HepG2 (cell line): ENCODE measurements at regions of chr20 and their contacts with region 1.

Region 1: DNA sequence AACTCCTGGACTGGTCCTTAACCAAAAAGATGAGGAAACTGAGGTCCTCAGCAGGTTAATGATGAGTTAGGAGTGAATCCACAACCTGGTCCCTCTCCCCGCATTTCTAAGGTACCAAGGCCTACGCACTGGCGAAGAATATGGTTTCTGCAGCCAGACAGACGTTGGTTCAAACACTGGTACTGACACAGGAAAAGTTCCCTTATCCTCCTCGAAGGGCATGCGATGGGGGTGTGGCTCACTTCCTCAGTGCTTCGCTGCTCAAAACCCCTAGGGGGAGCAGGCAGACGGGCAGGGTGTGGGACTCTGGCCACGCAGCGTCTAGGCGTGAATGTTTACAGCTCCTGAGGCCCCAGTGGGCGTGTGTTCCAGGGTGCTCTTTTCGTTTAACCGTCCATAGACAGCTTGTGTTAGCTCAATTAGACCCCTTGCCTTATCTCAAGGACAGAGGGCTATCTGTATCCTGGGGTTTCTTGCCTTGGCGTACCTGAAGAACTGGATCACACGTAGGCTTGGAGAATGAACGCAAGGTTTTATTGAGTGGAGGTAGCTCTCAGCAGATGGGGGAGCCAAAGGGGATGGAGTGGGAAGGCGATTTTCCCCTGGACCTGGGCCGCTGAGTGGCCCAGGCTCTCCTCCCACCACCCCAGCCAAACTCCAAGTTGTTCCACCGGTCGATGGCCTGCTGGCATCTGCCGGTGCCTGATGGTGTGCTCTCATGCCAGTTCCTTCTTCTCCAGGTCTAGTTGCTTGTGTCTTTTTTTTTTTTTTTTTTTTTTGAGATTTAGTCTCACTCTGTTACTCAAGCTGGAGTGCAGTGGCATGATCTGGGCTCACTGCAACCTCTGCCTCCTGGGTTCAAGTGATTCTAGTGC is 31.8 kb upstream of the PTPN1 start:
- DNase-seq: peak; percentile 83
- ATAC-seq: peak; percentile 99
- H3K4me3 ChIP-seq: peak overlapping the region in 1 of 3 experiments; percentile 24; a peak in 2 of 6 replicates
- H3K27ac ChIP-seq: no peak overlapping the region
- H3K4me1 ChIP-seq: peaks cover 37% of the 10 kb centered on the region
- H3K27me3 ChIP-seq: no peaks in the 10 kb centered on the region
- CTCF ChIP-seq: peak; percentile 98
- EP300 ChIP-seq: no peak
- POLR2A ChIP-seq: no peak
- RAD21 ChIP-seq: peak; percentile 90

Region 2: DNA sequence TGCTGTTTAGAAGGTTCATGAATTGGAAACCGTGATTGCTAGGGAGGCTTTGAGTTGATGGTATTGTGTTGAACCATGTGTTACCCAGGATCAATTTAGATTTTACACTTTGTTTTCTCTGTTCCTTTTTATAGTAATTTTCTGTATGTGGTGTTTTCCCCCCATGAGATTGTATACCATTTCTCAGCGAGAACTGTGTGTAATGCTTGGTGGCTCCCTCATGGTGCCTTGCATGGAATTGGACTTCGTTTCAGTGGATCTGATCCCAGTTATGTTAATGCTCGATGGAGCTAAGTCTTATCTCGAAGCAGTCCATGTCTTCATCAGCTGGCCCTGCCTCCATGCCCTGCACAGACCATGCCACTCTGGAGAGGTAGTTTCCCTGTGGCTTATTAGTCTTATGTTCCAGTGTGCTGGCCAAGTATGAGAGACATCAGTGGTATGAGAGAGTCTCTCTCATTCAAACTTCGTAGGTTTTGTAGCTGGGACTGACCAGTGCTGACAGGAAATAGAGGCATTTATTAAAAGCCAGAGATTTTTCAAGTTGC is 50.5 kb after region 1 on chr20:
- CTCF ChIA-PET with region 1: no interaction called
- POLR2A ChIA-PET with region 1: no interaction called
- in situ Hi-C with region 1: no loop called
- intact Hi-C with region 1: no loop called
- DNase-seq: no peak
- ATAC-seq: no peak
- H3K4me3 ChIP-seq: no peak overlapping the region
- H3K27ac ChIP-seq: no peak overlapping the region
- H3K4me1 ChIP-seq: peaks cover under 1% of the 10 kb centered on the region; the same call in 1 of the 2 replicates
- H3K27me3 ChIP-seq: no peaks in the 10 kb centered on the region
- CTCF ChIP-seq: no peak
- EP300 ChIP-seq: no peak
- POLR2A ChIP-seq: no peak
- RAD21 ChIP-seq: no peak

Region 3: GRCh38 chr20:50569864-50570836 is 91.8 kb after region 1 on chr20:
- CTCF ChIA-PET with region 1: interaction called, 45 read pairs
- POLR2A ChIA-PET with region 1: interaction called, 4 read pairs
- in situ Hi-C with region 1: loop called (anchors 5 kb)
- intact Hi-C with region 1: no loop called
- DNase-seq: peak; percentile 33
- ATAC-seq: peak; percentile 78
- H3K4me3 ChIP-seq: no peak overlapping the region
- H3K27ac ChIP-seq: no peak overlapping the region
- H3K4me1 ChIP-seq: peaks cover 8% of the 10 kb centered on the region
- H3K27me3 ChIP-seq: no peaks in the 10 kb centered on the region
- CTCF ChIP-seq: peak; percentile 57
- EP300 ChIP-seq: no peak
- POLR2A ChIP-seq: no peak
- RAD21 ChIP-seq: no peak

Region 4: DNA sequence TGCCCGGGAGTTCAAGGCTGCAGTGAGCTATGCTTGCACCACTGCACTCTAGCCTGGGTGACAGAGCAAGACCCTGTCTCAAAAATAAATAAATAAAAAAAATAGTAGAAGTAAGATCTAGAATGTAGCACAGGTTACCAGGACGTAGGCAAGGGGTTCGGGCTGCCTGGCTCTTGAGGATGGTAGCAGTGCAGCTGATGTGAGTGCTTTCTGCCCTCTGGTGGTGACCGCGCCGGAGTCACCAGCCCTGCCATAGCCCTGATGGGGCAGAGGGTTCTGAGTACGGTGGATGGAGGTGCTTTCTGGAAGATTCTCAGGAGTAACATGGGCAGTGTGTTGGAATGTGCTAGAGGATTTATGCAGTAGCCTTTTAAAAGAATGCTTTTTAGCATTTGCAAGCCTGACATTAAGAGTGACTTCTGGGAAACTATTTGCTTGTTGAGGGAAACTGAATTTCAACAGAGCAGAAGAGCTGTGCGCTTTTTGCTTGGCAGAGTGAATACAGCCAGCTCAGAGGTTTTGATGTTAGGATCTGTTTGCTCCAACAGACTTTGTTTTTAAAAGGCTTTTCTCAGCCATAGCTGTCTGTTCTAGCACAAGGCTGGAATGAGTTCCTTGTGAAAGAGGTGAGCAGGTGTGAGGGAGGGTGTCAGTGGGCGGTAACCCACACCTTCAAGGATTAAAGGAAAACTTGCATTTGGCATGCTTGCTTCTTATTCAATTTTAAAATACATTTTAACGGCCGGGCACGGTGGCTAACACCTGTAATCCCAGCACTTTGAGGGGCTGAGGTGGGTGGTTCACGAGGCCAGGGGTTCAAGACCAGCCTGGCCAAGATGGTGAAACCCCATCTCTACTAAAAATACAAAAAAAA is 97.7 kb after region 1 on chr20:
- CTCF ChIA-PET with region 1: interaction called, 45 read pairs
- POLR2A ChIA-PET with region 1: no interaction called
- in situ Hi-C with region 1: loop called (anchors 5 kb)
- intact Hi-C with region 1: loop called (anchors 1 kb)
- DNase-seq: peak; percentile 63
- ATAC-seq: peak; percentile 91
- H3K4me3 ChIP-seq: no peak overlapping the region
- H3K27ac ChIP-seq: no peak overlapping the region
- H3K4me1 ChIP-seq: peaks cover 8% of the 10 kb centered on the region
- H3K27me3 ChIP-seq: no peaks in the 10 kb centered on the region
- CTCF ChIP-seq: peak; percentile 93
- EP300 ChIP-seq: no peak
- POLR2A ChIP-seq: no peak
- RAD21 ChIP-seq: peak; percentile 88

Region 5: DNA sequence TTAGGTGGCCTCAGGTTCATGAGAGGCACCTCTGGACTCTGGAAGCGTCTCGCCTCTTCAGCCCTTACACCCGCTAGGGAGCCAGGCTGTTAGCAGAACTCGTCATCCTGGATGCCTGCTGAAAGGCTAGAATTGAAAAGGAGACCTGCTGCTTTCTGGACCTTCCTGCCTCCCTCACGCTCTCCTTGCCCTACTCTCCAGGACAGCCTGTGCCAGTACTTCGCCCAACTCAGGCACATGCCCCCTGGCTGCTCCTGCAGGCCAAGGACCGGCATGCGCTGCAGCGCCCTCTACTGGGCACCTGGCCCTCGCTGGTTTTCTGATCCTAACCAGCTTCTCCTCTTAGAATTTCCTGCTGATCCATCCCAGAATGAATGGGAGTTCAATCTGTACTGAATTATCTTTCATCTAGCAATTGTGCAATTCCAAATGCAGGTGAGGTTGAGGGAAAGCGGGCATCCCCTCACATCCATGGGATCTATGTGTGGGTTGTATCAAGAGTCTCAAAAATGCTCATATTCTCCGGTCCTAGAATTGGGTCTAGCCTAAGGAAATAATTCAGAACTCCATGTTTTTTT is 109.7 kb after region 1 on chr20:
- CTCF ChIA-PET with region 1: no interaction called
- POLR2A ChIA-PET with region 1: no interaction called
- in situ Hi-C with region 1: no loop called
- intact Hi-C with region 1: no loop called
- DNase-seq: peak; percentile 67
- ATAC-seq: peak; percentile 82
- H3K4me3 ChIP-seq: no peak overlapping the region
- H3K27ac ChIP-seq: no peak overlapping the region
- H3K4me1 ChIP-seq: no peaks in the 10 kb centered on the region
- H3K27me3 ChIP-seq: no peaks in the 10 kb centered on the region
- CTCF ChIP-seq: peak; percentile 98
- EP300 ChIP-seq: no peak
- POLR2A ChIP-seq: no peak
- RAD21 ChIP-seq: peak; percentile 80

Region 6: GRCh38 chr20:50815162-50815989 is 337.0 kb after region 1 on chr20:
- CTCF ChIA-PET with region 1: no interaction called
- POLR2A ChIA-PET with region 1: no interaction called
- in situ Hi-C with region 1: no loop called
- intact Hi-C with region 1: no loop called
- DNase-seq: no peak
- ATAC-seq: no peak
- H3K4me3 ChIP-seq: no peak overlapping the region
- H3K27ac ChIP-seq: no peak overlapping the region
- H3K4me1 ChIP-seq: peaks cover 11% of the 10 kb centered on the region
- H3K27me3 ChIP-seq: no peaks in the 10 kb centered on the region
- CTCF ChIP-seq: no peak
- EP300 ChIP-seq: no peak
- POLR2A ChIP-seq: no peak
- RAD21 ChIP-seq: no peak